Stomach (tissue), 19 donors: ENCODE measurements at regions of chr5 and their contacts with region 1.

Region 1: GRCh38 chr5:168104811-168105481 is 186.5 kb upstream of the WWC1 start:
- DNase-seq: no peak
- H3K4me3 ChIP-seq: no peak overlapping the region
- H3K27ac ChIP-seq: no peak overlapping the region
- H3K4me1 ChIP-seq: peaks cover 0 to 8% (median 0%) of the 10 kb centered on the region in 4 donors
- H3K27me3 ChIP-seq: no peaks in the 10 kb centered on the region
- CTCF ChIP-seq: no peak
- EP300 ChIP-seq: no peak
- POLR2A ChIP-seq: no peak

Region 2: GRCh38 chr5:168057905-168058304 is 47.0 kb before region 1 on chr5:
- intact Hi-C with region 1: no loop called
- DNase-seq: no peak
- H3K4me3 ChIP-seq: no peak overlapping the region
- H3K27ac ChIP-seq: no peak overlapping the region
- H3K4me1 ChIP-seq: no peaks in the 10 kb centered on the region
- H3K27me3 ChIP-seq: no peaks in the 10 kb centered on the region
- CTCF ChIP-seq: no peak
- EP300 ChIP-seq: no peak
- POLR2A ChIP-seq: no peak

Region 3: GRCh38 chr5:168198359-168198758 is 93.4 kb after region 1 on chr5:
- intact Hi-C with region 1: no loop called
- DNase-seq: no peak
- H3K4me3 ChIP-seq: no peak overlapping the region
- H3K27ac ChIP-seq: no peak overlapping the region
- H3K4me1 ChIP-seq: peaks cover 0 to 8% (median 0%) of the 10 kb centered on the region in 4 donors
- H3K27me3 ChIP-seq: no peaks in the 10 kb centered on the region
- CTCF ChIP-seq: no peak
- EP300 ChIP-seq: no peak
- POLR2A ChIP-seq: no peak

Region 4: DNA sequence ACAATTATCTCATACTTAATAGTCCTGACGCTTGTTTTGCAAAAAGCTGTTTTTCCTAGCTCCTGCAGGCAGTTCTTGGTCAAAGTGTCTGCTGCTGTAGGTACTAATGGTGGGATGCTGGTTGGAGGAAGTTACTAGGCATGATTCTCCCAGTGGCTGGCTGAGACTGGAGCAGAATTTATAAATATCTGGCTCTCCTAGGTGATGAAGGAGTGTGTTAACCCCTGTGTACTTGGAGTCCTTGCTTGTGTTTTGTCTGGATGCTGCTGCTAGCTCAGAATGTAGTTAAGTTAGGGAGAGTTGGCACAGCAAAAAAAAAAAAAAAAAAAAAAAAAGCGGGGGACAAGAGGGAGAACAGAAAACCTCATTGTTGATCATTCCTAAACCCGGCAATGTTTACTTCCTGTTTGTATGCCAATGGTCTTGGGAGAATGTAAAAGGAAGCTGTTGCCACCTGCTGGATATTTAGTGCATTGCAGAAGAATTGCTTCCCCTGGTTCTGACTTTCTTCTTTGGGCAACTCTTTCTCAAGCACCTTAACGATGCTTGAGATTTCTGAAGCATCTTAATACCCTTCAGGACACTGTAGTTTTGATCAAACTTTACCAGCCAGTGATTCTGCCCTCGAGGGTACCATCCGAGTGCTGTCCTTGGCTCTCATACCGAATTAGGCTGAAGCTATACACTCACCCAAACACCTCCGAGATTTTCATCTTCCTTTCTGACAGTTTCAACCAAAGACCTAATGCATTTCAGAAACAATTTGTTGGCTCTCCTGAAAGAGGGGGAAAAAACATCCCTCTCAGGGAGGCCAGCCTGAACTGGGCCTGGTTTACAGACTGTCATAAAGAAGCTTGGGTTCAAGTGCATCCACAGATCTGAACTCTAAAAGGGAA is 114.8 kb after region 1 on chr5:
- intact Hi-C with region 1: loop called (anchors 10 kb)
- DNase-seq: peak; percentile 55 to 88
- H3K4me3 ChIP-seq: peak overlapping the region in 1 of 4 donors; percentile 17
- H3K27ac ChIP-seq: no peak overlapping the region
- H3K4me1 ChIP-seq: peaks cover 0 to 10% (median 3%) of the 10 kb centered on the region in 4 donors
- H3K27me3 ChIP-seq: peaks cover 0 to 6% (median 0%) of the 10 kb centered on the region in 3 donors
- CTCF ChIP-seq: peak in 5 of 7 experiments; percentile 83 to 97 (median 87)
- EP300 ChIP-seq: no peak
- POLR2A ChIP-seq: no peak